ENCODE measurements at regions of chr14 and their contacts with region 1.

Region 1: DNA sequence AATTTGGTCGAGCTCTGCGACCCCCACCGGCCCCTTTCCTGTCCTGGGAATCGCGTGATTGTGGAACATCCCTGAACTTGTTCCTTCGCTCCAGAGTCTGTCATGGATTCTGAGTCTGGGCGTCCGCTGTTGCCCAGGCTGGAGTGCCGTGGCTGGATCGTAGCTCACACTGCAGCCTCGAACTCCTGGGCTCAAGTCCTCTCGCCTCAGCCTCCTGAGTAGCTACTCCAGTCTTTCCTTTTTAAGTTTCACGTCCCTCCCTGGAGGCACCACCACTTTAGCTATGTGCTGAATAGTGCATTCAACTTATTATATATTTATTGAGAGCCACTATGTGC is 698 bp downstream of the ACOT6 start:
- DNase-seq: no peak
- ATAC-seq: peak; percentile 2
- H3K4me3 Mint-ChIP-seq: peak overlapping the region; percentile 76
- H3K27ac Mint-ChIP-seq: peak overlapping the region; percentile 80
- H3K4me1 Mint-ChIP-seq: peaks cover 6% of the 10 kb centered on the region
- H3K27me3 Mint-ChIP-seq: no peaks in the 10 kb centered on the region

Region 2: DNA sequence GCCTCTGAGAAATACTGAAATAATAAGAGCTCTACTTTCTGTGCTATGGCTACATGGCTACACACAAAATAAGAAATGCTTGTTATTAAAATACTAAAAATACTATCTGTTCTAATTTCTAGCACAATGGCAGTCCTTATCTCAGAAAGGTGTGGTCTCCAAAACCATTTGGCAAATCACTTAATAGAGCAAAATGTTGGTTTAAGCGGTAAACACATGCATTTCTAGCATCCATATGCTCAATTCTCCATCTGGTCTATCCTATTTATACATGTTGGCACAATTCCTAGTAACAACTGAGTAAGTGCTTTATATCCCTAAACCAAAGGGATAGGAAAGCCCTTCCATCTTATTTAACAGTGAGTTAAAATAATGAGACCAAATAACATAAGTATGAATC is 268.7 kb before region 1 on chr14:
- CTCF ChIA-PET with region 1: no interaction called
- POLR2A ChIA-PET with region 1: no interaction called
- intact Hi-C with region 1: no loop called
- DNase-seq: no peak
- ATAC-seq: no peak
- H3K4me3 Mint-ChIP-seq: no peak overlapping the region
- H3K27ac Mint-ChIP-seq: no peak overlapping the region
- H3K4me1 Mint-ChIP-seq: peaks cover 3% of the 10 kb centered on the region
- H3K27me3 Mint-ChIP-seq: no peaks in the 10 kb centered on the region

Region 3: DNA sequence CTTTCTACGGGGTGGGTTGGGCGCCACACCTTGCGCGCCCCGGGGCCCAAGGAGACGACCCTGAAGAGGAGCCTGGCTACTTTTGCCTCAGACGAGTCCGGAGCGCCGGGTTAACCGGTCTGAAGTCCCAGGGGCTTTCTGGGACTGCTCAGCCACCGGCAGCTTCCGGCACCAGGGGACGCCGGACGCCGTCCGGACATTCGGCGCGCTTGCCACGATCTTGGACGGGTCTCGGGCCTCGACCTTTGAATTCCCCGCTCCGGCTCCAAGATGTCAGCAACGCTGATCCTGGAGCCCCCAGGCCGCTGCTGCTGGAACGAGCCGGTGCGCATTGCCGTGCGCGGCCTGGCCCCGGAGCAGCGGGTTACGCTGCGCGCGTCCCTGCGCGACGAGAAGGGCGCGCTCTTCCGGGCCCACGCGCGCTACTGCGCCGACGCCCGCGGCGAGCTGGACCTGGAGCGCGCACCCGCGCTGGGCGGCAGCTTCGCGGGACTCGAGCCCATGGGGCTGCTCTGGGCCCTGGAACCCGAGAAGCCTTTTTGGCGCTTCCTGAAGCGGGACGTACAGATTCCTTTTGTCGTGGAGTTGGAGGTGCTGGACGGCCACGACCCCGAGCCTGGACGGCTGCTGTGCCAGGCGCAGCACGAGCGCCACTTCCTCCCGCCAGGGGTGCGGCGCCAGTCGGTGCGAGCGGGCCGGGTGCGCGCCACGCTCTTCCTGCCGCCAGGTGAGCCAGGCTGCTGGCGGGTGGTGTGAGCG is 21.1 kb before region 1 on chr14 and contains the start of gene ACOT4:
- CTCF ChIA-PET with region 1: interaction called, 6 read pairs
- POLR2A ChIA-PET with region 1: interaction called, 4 read pairs
- intact Hi-C with region 1: loop called in 1 of 2 experiments (anchors 1 kb)
- DNase-seq: peak; percentile 69
- ATAC-seq: peak; percentile 85
- H3K4me3 Mint-ChIP-seq: peak within 1 kb of the TSS; percentile 65
- H3K27ac Mint-ChIP-seq: peak within 1 kb of the TSS; percentile 56
- H3K4me1 Mint-ChIP-seq: peaks cover 9% of the 10 kb centered on the region
- H3K27me3 Mint-ChIP-seq: no peaks in the 10 kb centered on the region
- total RNA-seq, gene ACOT4: 3.0 to 3.1 TPM

Measured in activated CD4-positive, alpha-beta T cell treated with anti-CD3 and anti-CD28 coated beads for 36 hours (primary cell).